OCI-LY7 (cell line): ENCODE measurements at regions of chr22 and their contacts with region 1.

Region 1: DNA sequence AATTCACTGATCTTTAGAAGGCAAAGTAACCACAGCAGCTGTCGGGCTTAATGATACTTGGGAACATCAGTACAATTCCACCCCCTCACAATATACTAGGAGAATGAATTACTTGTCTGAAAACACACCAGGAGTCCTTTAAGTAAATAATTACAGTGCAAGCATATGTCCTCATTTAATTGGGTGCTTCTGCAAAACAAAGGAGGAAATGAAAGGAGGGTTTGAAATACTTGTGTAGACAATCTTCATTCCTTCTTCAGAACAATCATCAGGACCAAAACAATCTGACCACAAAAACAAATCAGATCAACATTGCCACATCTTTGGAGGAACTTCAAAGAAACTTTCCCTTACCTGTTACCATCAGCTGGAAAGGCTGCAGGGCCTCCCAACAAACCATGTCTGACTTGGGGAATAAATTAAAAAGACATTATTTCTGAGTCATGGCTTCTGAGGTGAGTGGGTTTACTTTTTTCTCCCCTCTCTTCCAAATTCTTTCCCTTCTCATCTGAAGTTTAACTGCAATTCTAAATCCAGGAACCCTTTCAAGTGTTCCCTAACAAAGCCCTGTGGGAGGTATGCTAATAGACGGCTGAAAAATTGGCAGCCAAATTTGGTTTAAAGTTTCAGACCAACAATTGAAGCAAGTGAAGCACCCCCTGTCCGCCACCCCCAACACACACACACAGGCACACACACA is 12.5 kb upstream of the CCDC117 start:
- DNase-seq: peak; percentile 25
- H3K4me3 ChIP-seq: peak overlapping the region; percentile 20
- H3K27ac ChIP-seq: peak overlapping the region; percentile 27
- H3K4me1 ChIP-seq: peaks cover 14% of the 10 kb centered on the region
- CTCF ChIP-seq: no peak

Region 2: DNA sequence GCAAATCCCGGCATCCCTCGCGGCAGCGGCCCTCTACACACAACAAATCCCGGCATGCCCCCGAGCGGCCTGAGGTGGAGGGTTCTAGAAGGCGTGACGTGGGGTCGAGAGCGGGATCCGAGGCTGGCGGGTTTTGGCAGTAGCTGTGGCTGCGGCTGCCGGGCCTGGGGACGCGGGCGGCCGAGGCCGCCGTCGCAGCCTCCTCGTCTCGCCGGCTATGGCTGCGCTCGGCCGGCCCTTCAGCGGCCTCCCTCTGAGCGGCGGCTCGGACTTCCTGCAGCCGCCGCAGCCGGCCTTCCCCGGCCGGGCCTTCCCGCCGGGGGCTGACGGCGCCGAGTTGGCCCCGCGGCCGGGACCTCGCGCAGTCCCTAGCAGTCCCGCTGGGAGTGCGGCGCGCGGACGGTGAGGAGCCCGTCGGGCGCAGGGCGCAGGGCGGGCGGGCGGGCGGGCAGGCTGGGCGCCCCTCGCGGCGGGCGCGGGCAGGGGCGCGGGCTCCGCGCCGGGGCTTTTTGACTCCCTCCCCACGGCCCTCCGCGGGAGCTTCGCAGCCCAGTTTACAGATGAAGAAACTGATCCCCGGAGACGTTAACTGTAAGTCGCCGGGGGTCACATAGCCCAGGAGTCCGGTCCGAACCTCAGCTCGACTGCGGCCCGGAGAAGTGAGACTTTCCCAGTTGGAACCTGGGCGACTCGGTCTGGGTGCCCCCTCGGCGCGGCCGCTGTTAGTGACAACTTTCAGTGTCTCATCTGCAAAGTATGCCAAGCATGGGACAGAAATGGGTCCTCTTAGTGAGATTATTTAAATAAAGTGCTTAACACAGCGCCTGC is 12.8 kb after region 1 on chr22 and contains the start of gene CCDC117:
- CTCF ChIA-PET with region 1: no interaction called
- POLR2A ChIA-PET with region 1: interaction called, 11 read pairs
- intact Hi-C with region 1: no loop called
- DNase-seq: peak; percentile 95
- H3K4me3 ChIP-seq: peak within 1 kb of the TSS; percentile 90
- H3K27ac ChIP-seq: peak within 1 kb of the TSS; percentile 68
- H3K4me1 ChIP-seq: peaks cover 5% of the 10 kb centered on the region
- CTCF ChIP-seq: 0 out of 2 replicates have a peak, but pooled peaks have one; percentile 28
- total RNA-seq, gene CCDC117: 19.5 and 21.4 TPM in 2 replicates

Region 3: GRCh38 chr22:28817919-28818909 is 58.2 kb after region 1 on chr22:
- CTCF ChIA-PET with region 1: no interaction called
- POLR2A ChIA-PET with region 1: no interaction called
- intact Hi-C with region 1: no loop called
- DNase-seq: peak; percentile 46
- H3K4me3 ChIP-seq: no peak overlapping the region
- H3K27ac ChIP-seq: peak overlapping the region; percentile 7
- H3K4me1 ChIP-seq: peaks cover 46% of the 10 kb centered on the region
- CTCF ChIP-seq: no peak

Region 4: GRCh38 chr22:29408945-29409344 is 648.9 kb after region 1 on chr22:
- CTCF ChIA-PET with region 1: no interaction called
- POLR2A ChIA-PET with region 1: no interaction called
- intact Hi-C with region 1: no loop called
- DNase-seq: no peak
- H3K4me3 ChIP-seq: peak overlapping the region; percentile 6
- H3K27ac ChIP-seq: no peak overlapping the region
- H3K4me1 ChIP-seq: peaks cover 33% of the 10 kb centered on the region
- CTCF ChIP-seq: no peak